H1 (cell line): ENCODE measurements at regions of chr19 and their contacts with region 1.

Region 1: DNA sequence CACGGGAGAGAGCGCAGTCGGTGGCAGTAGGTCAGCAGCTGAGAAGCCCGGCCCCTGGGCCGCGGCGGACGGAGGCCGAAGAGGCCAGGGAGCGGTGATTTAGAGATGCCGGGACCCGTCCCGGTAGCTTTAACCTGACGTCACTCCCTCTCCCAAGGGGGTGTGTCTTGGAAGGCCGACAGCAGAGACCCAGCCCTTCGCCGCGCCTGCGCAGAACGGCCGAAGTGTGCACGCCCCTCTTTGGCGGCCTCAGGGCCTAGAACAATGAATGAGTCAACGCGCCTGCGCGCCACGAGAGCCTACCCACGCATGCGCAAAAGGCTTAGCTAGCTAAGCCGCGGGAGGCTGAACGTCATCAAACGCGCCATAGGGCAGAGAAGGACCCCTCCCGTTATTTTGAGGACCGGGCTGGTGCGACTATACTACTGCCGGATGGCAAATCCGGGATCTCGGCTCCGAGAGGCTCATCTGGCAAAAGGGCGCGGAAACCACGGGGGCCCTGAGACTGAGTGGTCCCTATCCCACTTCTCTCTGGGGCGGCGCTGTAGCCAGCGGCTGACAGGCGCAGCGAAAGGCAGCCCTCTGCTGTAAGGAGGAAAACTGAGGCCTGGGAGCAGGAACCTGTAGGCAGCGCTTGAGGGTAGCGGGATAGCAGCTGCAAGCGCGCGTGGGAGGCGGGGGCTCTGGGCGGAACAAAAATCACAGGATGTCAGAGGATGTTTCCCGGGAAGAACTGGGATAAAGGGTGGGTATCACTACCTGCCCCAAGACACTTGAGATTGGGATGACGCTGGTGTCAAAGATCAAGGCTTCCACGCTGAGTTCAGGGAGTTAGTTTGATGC is at the starts of genes IRGQ and ZNF576:
- DNase-seq: peak; percentile 100
- H3K4me3 ChIP-seq: peak within 1 kb of the TSS; percentile 79 to 90 (median 86)
- H3K27ac ChIP-seq: peak within 1 kb of the TSS; percentile 97
- H3K4me1 ChIP-seq: peaks cover 2 to 6% (median 3%) of the 10 kb centered on the region in 4 experiments; a peak in 6 of 7 replicates
- H3K27me3 ChIP-seq: no peaks in the 10 kb centered on the region
- CTCF ChIP-seq: peak in 2 of 3 experiments; percentile 3 to 7; a peak in 1 of 4 replicates
- EP300 ChIP-seq: no peak
- POLR2A ChIP-seq: peak in 1 of 2 experiments; percentile 66; a peak in 2 of 3 replicates
- RAD21 ChIP-seq: peak; percentile 4 to 32; a peak in 2 of 4 replicates
- total RNA-seq, gene IRGQ: 39.9 and 42.9 TPM in 2 replicates
- total RNA-seq, gene ZNF576: 13.6 and 14.7 TPM in 2 replicates

Region 2: DNA sequence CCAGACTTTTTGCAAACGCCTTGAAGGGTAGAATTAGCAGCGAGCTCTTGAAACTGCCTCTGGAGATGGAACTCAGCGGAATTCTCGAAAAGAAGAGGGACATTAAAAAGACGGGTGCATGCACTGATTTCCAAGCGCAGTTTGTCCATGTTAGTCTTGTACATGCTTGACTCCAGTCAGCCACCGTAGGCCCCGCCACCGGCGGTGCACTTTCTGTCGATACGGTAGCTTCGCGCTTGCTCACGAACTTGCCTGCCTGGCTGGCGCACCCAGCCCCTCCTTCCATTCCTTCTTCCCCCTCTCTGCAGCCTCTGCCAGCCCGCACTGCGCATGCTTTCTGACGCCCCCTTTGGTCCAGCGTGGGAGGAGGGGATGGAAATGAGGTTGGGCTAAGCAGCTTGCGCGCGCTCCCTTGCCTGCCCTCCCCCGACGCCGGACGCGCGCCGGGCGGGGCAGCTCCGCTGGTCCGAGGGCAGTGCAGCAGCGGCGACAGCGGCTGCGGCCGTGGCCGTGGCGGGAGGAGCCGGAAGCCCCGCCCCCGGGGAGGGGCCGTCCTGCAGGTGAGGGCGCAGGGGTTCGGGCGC is 63.2 kb before region 1 on chr19 and contains the start of gene ZNF575:
- CTCF ChIA-PET with region 1: interaction called, 86 read pairs
- POLR2A ChIA-PET with region 1: interaction called, 13 read pairs
- DNase-seq: peak; percentile 90 to 92
- H3K4me3 ChIP-seq: peak within 1 kb of the TSS; percentile 63 to 74 (median 68)
- H3K27ac ChIP-seq: no peak within 1 kb of the TSS
- H3K4me1 ChIP-seq: peaks cover 0 to 14% (median 4%) of the 10 kb centered on the region in 4 experiments; a peak in 6 of 7 replicates
- H3K27me3 ChIP-seq: no peaks in the 10 kb centered on the region
- CTCF ChIP-seq: no peak
- EP300 ChIP-seq: no peak
- POLR2A ChIP-seq: no peak
- RAD21 ChIP-seq: no peak
- total RNA-seq, gene ZNF575: not detected in 2 replicates

Region 3: DNA sequence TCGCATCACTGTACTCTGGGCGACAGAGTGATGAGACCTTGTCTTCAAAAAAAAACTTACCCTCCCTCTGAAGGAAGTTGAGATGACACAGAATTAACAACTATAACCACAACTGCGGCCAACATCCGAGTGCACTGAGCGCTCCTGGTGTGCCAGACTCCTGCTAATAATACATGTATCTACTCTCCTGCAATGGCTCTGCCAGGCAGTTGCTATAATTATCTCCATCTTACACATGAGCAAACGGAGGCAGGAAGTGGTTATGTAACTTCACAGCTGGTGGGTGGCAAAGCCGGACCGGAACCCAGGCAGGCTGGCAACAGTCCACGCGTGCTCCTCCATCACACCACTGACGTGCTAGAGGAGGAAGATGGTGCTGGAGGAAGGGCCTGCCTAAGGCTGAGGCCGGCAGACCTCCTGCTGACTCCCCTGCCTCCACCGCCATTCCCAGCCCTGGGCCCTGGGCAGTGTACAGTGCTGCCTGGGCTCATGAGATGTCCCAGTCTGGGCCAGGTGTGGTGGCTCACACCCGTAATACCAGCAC is 33.5 kb before region 1 on chr19:
- CTCF ChIA-PET with region 1: interaction called, 42 read pairs
- POLR2A ChIA-PET with region 1: interaction called, 4 read pairs
- DNase-seq: no peak
- H3K4me3 ChIP-seq: no peak overlapping the region
- H3K27ac ChIP-seq: no peak overlapping the region
- H3K4me1 ChIP-seq: no peaks in the 10 kb centered on the region
- H3K27me3 ChIP-seq: no peaks in the 10 kb centered on the region
- CTCF ChIP-seq: no peak
- EP300 ChIP-seq: no peak
- POLR2A ChIP-seq: no peak
- RAD21 ChIP-seq: no peak

Region 4: DNA sequence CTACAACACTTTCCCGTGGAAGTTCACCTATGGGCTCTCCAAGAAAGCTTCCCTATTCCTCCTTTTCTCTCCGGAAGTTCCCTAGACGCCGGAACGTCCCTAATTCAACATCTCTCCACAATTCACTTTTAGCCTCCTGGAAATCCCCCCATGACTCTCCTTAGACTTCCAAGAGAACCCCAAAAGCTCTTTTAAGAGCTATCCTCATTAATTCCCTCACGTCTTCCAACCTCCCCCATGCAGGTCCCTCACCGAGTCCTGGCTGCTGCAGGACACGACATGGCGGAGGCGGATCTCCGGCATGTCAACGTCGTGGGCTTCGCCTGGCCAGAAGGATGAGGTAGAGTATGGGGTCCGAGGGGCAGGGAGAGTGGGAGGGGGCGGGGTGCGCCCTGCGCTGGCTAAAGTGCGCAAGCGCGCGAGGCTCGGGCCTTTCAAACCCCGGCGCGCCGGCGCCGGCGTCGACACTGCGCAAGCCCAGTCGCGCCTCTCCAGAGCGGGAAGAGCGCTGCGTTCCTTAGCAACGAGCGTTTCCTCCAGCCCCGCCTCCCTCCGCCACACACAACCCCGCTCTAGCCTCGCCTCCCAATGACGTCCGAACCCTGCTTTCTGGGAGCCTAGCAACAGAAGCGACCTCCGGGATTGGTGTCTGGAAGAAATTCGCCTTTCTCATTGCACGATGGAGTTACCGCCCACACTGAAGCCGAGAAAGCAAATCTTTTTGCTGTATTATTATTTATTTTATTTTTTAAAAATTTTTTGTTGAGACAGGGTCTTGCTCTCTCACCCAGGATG is 20.9 kb before region 1 on chr19 and contains the starts of genes PINLYP and XRCC1:
- CTCF ChIA-PET with region 1: interaction called, 45 read pairs
- POLR2A ChIA-PET with region 1: interaction called, 36 read pairs
- DNase-seq: peak; percentile 93 to 95
- H3K4me3 ChIP-seq: peak within 1 kb of the TSS; percentile 66 to 89 (median 76)
- H3K27ac ChIP-seq: peak within 1 kb of the TSS; percentile 68
- H3K4me1 ChIP-seq: peaks cover 0 to 13% (median 8%) of the 10 kb centered on the region in 4 experiments; a peak in 6 of 7 replicates
- H3K27me3 ChIP-seq: no peaks in the 10 kb centered on the region
- CTCF ChIP-seq: no peak
- EP300 ChIP-seq: no peak
- POLR2A ChIP-seq: peak; percentile 18 to 66
- RAD21 ChIP-seq: no peak
- total RNA-seq, gene PINLYP: 7.5 and 9.2 TPM in 2 replicates
- total RNA-seq, gene XRCC1: 42.5 and 48.5 TPM in 2 replicates

Region 5: DNA sequence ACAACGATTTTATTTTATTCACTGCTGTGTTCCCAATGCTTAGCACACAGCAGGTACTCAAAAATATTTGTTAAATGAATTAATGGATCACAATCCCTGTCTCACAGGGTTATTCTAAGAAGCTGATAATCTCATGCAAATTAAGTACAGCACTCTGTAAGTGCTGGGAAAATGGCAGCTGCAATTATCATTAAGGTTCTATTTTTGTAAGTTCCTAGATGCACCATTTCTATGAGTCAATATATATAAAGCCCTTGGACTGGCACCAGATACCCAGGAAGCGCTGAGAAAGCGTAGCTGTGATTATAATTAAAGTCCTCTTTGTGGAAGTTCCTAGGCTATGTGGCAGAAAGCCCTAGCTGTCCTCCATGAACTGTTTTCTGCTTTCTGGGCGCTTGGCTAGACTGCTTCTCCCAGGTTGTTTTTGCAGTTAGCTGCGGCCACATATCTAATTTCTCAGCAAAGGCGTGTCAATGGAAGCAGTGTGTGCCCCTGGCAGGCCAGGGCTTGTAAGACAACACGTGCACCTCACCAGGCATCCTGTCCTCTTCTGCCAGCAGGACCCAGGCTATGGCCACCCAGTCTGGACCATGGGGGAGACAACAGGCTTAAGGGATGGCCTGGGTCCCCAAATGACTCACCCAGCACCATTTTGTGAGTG is 10.5 kb after region 1 on chr19:
- CTCF ChIA-PET with region 1: interaction called, 9 read pairs
- POLR2A ChIA-PET with region 1: interaction called, 17 read pairs
- DNase-seq: no peak
- H3K4me3 ChIP-seq: no peak overlapping the region
- H3K27ac ChIP-seq: no peak overlapping the region
- H3K4me1 ChIP-seq: no peaks in the 10 kb centered on the region
- H3K27me3 ChIP-seq: no peaks in the 10 kb centered on the region
- CTCF ChIP-seq: no peak
- EP300 ChIP-seq: no peak
- POLR2A ChIP-seq: no peak
- RAD21 ChIP-seq: no peak

Region 6: GRCh38 chr19:43651758-43652545 is 55.7 kb after region 1 on chr19:
- CTCF ChIA-PET with region 1: interaction called, 32 read pairs
- POLR2A ChIA-PET with region 1: no interaction called
- DNase-seq: peak in 1 of 2 experiments; percentile 80
- H3K4me3 ChIP-seq: no peak overlapping the region
- H3K27ac ChIP-seq: no peak overlapping the region
- H3K4me1 ChIP-seq: no peaks in the 10 kb centered on the region; a peak in 1 of 7 replicates
- H3K27me3 ChIP-seq: no peaks in the 10 kb centered on the region
- CTCF ChIP-seq: peak; percentile 84 to 92 (median 86)
- EP300 ChIP-seq: no peak
- POLR2A ChIP-seq: no peak
- RAD21 ChIP-seq: peak; percentile 81 to 87

Region 7: GRCh38 chr19:43738780-43739211 is 142.6 kb after region 1 on chr19:
- CTCF ChIA-PET with region 1: no interaction called
- POLR2A ChIA-PET with region 1: no interaction called
- DNase-seq: no peak
- H3K4me3 ChIP-seq: no peak overlapping the region
- H3K27ac ChIP-seq: no peak overlapping the region
- H3K4me1 ChIP-seq: no peaks in the 10 kb centered on the region
- H3K27me3 ChIP-seq: no peaks in the 10 kb centered on the region
- CTCF ChIP-seq: no peak
- EP300 ChIP-seq: no peak
- POLR2A ChIP-seq: no peak
- RAD21 ChIP-seq: no peak